Activated CD4-positive, alpha-beta T cell treated with anti-CD3 and anti-CD28 coated beads for 36 hours (primary cell): ENCODE measurements at regions of chr4 and their contacts with region 1.

Region 1: DNA sequence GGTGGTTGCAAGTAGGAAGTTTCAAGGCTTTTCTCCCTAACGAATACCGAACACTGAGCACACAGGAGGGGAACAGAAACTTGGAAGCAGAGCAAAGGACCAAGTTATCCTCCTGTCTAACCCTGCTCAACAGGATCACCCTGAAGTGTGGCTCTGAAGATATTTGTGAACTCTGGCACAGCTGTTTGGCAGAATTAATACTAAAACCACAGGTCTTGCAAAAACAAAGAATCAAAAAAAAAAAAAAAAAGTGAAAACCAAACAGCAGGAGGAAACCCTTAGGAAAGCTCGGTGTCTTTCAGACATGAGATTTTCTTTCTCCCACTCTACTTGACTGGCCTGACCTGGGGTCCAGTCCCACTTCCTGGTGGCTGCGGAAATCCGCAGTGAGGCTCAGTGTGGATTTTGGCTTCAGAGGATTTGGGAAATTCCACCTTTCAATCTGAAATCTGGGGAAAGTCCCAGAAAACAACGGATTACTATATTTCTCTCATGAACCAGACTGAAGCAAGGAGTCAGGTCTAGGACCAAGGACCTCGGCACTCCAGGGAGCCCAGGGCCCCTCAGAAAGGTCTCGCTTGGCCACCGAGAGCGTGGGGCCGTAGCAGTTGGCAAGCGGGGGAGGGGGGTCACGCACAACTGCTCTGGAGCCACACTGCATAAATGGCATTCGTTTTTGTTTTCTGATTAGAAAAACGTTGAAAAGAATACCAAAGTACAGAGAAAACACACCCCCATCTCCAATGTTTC is 867 bp downstream of the TIFA start:
- DNase-seq: peak; percentile 43
- ATAC-seq: no peak
- H3K4me3 Mint-ChIP-seq: peak overlapping the region; percentile 96
- H3K27ac Mint-ChIP-seq: peak overlapping the region; percentile 96
- H3K4me1 Mint-ChIP-seq: peaks cover 73% of the 10 kb centered on the region
- H3K27me3 Mint-ChIP-seq: no peaks in the 10 kb centered on the region

Region 2: GRCh38 chr4:112060212-112060611 is 224.6 kb before region 1 on chr4:
- CTCF ChIA-PET with region 1: no interaction called
- POLR2A ChIA-PET with region 1: no interaction called
- intact Hi-C with region 1: no loop called
- DNase-seq: no peak
- ATAC-seq: no peak
- H3K4me3 Mint-ChIP-seq: no peak overlapping the region
- H3K27ac Mint-ChIP-seq: no peak overlapping the region
- H3K4me1 Mint-ChIP-seq: no peaks in the 10 kb centered on the region
- H3K27me3 Mint-ChIP-seq: peaks cover 7% of the 10 kb centered on the region

Region 3: DNA sequence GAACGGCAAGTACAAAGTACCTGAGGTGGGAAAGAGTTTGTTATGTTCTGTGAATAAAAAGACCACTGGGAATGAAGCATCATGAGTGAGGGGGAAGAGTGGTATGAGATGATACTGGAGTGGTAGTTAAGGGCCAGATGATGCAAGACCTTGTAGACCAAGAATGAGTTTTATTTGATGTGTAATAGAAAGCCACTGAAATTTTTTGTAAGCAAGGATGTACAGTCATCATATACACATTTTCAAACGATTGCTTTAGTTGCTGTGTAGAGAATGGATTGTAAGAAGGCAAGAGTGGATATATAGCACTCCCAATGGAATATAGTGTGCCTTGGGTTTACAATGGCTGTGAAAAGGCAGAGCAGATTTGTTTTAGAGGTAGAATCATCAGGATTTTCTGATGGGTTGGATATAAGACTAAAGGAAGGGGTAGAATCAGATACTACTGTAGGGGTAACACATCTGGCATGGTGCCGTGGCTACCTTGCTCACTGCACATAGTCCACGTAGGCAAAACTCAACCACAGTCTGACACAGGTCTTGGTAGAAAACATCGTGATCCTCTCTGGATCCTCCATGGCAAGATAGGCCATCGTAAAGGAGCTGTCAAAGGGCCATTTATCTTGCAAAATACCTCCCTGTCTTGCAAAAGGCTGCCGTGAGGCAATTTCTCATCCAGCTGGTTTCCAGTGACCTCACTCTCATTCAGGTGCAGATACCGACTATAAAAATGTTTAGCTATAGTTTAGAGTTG is 14.0 kb before region 1 on chr4:
- CTCF ChIA-PET with region 1: interaction called, 8 read pairs
- POLR2A ChIA-PET with region 1: interaction called, 25 read pairs
- intact Hi-C with region 1: loop called in 1 of 2 experiments (anchors 1 kb)
- DNase-seq: no peak
- ATAC-seq: peak; percentile 44
- H3K4me3 Mint-ChIP-seq: no peak overlapping the region
- H3K27ac Mint-ChIP-seq: peak overlapping the region; percentile 80
- H3K4me1 Mint-ChIP-seq: peaks cover 57% of the 10 kb centered on the region
- H3K27me3 Mint-ChIP-seq: no peaks in the 10 kb centered on the region

Region 4: DNA sequence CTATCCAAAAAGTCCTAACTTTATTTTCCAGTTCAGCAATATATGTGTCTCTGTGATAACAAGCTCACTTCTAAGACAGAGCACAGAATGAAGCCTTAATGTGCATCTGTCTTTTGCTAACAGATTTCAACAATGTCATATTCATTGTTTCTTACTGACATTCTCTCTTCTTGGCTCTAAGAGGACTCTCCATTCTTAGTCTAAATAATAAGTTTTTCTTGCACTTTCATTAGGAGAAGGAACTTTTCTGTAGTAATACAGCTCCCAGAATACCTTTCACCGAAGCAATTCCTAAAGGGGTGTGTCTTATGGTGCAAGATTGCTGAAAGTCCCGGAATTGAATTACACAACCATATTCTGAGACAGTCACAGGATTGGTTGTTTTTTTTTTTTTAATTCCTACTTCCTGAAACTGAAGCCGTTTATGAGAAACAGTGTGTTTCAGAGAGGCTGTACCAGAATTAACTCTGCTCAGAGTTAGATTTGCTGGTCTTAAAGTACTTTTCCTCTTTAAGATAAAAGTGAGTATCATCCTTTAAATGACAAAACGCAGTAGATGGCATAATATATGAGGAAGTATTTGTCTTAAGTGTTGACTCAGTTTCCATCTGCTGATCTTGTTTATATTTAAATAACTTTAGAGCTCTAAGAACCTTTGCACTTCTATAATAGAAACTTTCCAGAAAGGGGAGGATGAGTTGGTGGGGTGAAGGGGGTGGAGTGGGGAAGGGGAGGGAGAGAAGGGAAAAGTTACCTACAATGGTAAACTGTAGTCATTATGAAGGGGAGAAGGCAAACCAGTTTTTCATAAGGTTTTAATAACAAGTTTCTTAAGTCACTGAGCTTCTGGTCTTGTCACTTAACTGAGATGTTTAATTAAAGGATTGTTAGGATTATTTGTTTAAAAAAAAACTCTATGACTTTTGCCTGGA is 12.4 kb after region 1 on chr4 and contains the start of gene ALPK1:
- CTCF ChIA-PET with region 1: interaction called, 12 read pairs
- POLR2A ChIA-PET with region 1: interaction called, 6 read pairs
- intact Hi-C with region 1: loop called in 1 of 2 experiments (anchors 1 kb)
- DNase-seq: no peak
- ATAC-seq: peak; percentile 89
- H3K4me3 Mint-ChIP-seq: peak within 1 kb of the TSS; percentile 79
- H3K27ac Mint-ChIP-seq: peak within 1 kb of the TSS; percentile 91
- H3K4me1 Mint-ChIP-seq: peaks cover 24% of the 10 kb centered on the region
- H3K27me3 Mint-ChIP-seq: no peaks in the 10 kb centered on the region
- total RNA-seq, gene ALPK1: 23.2 to 24.3 TPM

Region 5: DNA sequence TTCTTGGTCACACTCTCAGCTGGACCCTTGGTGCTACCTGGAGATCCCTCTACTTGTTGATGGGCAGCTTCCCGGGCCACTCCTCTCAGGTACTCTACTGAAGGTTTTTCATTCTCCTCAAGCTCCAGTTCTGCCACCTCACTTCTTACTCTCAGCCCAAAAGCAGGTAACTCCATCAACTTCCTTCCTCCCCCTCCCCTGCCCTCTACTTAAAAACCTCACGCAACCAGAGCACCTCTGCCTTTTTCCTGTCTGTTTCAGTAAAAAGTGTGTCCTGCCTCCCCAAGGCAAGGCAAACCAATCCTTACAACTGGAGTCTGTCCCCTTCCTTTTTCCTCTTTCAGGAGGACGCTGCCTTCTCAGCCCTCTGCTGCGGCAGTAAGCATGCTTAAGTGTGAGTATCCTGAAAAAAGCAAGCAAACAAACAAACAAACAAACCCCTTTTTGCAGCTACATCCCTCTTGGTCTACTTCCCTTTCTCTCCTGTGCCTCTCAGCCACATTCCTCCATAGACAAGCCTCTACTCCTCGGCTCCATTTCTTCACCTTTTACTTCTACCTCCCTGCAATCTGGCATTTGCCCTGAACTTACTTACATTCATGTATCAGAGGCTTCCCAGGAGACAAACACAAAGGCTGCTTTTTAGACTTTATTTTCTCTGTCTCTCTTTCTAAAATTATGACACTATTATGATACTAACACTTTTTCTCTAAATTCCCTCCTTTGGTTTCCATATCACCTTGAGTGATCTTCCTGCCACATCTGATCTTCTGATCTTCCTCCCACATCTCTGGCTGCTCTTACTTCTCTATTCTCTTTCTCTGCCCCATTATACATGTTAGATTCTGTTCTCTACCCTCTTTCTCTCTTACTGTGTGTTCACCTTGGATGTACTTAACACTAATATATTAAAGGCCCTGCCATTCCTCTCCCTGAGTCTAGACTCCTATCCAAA is 17.8 kb after region 1 on chr4:
- CTCF ChIA-PET with region 1: interaction called, 12 read pairs
- POLR2A ChIA-PET with region 1: no interaction called
- intact Hi-C with region 1: loop called in 1 of 2 experiments (anchors 1 kb)
- DNase-seq: peak; percentile 25
- ATAC-seq: peak; percentile 85
- H3K4me3 Mint-ChIP-seq: no peak overlapping the region
- H3K27ac Mint-ChIP-seq: no peak overlapping the region
- H3K4me1 Mint-ChIP-seq: peaks cover 27% of the 10 kb centered on the region
- H3K27me3 Mint-ChIP-seq: no peaks in the 10 kb centered on the region

Region 6: GRCh38 chr4:112321776-112322684 is 37.2 kb after region 1 on chr4:
- CTCF ChIA-PET with region 1: interaction called, 4 read pairs
- POLR2A ChIA-PET with region 1: no interaction called
- intact Hi-C with region 1: loop called (anchors 1 to 2 kb)
- DNase-seq: peak; percentile 89
- ATAC-seq: peak; percentile 75
- H3K4me3 Mint-ChIP-seq: no peak overlapping the region
- H3K27ac Mint-ChIP-seq: no peak overlapping the region
- H3K4me1 Mint-ChIP-seq: peaks cover 11% of the 10 kb centered on the region
- H3K27me3 Mint-ChIP-seq: no peaks in the 10 kb centered on the region

Region 7: GRCh38 chr4:112515304-112516067 is 230.6 kb after region 1 on chr4:
- CTCF ChIA-PET with region 1: interaction called, 4 read pairs
- POLR2A ChIA-PET with region 1: interaction called, 3 read pairs
- intact Hi-C with region 1: loop called in 1 of 2 experiments (anchors 1 kb)
- DNase-seq: peak; percentile 76
- ATAC-seq: peak; percentile 68
- H3K4me3 Mint-ChIP-seq: peak overlapping the region; percentile 89
- H3K27ac Mint-ChIP-seq: peak overlapping the region; percentile 67
- H3K4me1 Mint-ChIP-seq: peaks cover 45% of the 10 kb centered on the region
- H3K27me3 Mint-ChIP-seq: peaks cover 80% of the 10 kb centered on the region